Posterior cingulate gyrus (tissue), 11 donors: ENCODE measurements at regions of chr6 and their contacts with region 1.

Region 1: GRCh38 chr6:116287689-116288282 is 8.1 kb upstream of the TSPYL1 start:
- DNase-seq: no peak

Region 2: GRCh38 chr6:116040980-116041379 is 246.8 kb before region 1 on chr6:
- intact Hi-C with region 1: no loop called
- DNase-seq: no peak

Region 3: GRCh38 chr6:116531675-116532570 is 244.1 kb after region 1 on chr6:
- intact Hi-C with region 1: loop called (anchors 2 kb)
- DNase-seq: peak in 5 of 10 donors; percentile 10 to 51 (median 42)

Region 4: GRCh38 chr6:116561377-116562018 is 273.7 kb after region 1 on chr6:
- intact Hi-C with region 1: loop called (anchors 1 kb)
- DNase-seq: peak; percentile 54 to 95 (median 80)

Region 5: DNA sequence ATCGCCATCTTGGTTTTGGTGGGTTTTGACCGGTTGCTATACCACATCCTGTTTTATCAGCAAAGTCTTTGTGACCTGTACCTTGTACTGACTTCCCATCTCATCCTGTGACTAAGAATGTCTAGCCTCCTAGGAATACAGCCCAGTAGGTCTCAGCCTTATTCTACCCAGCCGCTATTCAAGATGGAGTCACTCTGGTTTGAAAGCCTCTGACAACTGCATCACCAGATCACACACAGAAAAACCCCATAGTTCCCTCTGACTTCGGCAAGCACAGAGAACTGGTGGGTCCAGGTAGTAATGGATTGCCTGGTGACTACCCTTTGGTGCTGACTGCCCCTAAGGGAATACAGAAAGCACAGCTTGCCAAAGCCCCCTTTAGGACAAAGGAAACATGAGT is 318.1 kb after region 1 on chr6:
- intact Hi-C with region 1: no loop called
- DNase-seq: no peak